Left lung (tissue), 14 donors: ENCODE measurements at regions of chr12 and their contacts with region 1.

Region 1: GRCh38 chr12:121673003-121673511 is 3.6 kb upstream of the MORN3 start:
- DNase-seq: peak in 1 of 4 donors; percentile 37
- ATAC-seq: peak; percentile 18
- H3K4me3 ChIP-seq: peak overlapping the region; percentile 40 to 51
- H3K27ac ChIP-seq: peak overlapping the region in 1 of 2 donors; percentile 64
- H3K4me1 ChIP-seq: peaks cover 7 to 21% of the 10 kb centered on the region in 2 donors
- H3K27me3 ChIP-seq: no peaks in the 10 kb centered on the region
- CTCF ChIP-seq: no peak

Region 2: GRCh38 chr12:121550974-121551634 is 122.0 kb before region 1 on chr12:
- intact Hi-C with region 1: loop called in 1 of 2 experiments (anchors 10 kb)
- DNase-seq: peak in 1 of 4 donors; percentile 25
- ATAC-seq: peak; percentile 79
- H3K4me3 ChIP-seq: no peak overlapping the region
- H3K27ac ChIP-seq: no peak overlapping the region
- H3K4me1 ChIP-seq: peaks cover 0 to 16% of the 10 kb centered on the region in 2 donors
- H3K27me3 ChIP-seq: no peaks in the 10 kb centered on the region
- CTCF ChIP-seq: no peak

Region 3: DNA sequence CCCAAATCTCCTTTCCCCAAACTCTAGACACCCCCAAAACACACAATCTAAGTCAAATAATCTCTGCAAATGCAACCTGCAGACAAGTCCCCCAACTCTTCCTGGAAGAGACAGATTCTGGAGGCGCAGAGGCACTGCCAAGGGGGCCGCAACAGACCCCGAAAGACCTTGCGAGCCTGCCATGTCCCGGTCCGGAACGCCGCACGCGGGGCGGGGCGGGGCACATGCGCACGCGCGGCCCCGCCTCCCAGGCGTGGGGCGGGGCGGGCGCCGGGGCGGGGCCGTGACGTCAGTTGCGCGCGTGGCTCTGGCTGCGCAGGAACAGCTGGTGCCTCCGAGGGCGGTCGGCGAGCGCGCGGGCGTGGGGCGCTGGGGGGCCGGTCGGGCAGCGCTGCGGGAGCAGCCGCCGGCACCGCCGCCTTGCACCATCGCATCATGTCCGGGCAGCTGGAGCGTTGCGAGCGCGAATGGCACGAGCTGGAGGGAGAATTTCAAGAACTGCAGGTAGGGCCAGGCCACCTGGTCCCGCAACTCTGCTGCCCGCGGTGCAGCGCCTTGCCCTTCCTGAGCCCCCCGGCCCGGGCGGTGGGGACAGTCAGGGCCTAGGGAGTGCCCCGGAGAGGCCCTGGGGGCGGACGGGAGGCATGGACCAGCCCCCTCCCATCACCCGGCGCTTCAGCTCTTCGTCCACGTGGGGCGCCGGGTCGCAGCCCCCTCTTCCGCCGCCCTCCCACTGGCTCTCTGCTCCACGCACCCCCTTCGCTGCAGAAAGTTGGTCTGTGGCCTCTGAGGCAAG is 39.6 kb after region 1 on chr12 and contains the start of gene TMEM120B:
- intact Hi-C with region 1: no loop called
- DNase-seq: peak; percentile 86 to 96 (median 86)
- ATAC-seq: peak; percentile 89
- H3K4me3 ChIP-seq: peak within 1 kb of the TSS; percentile 88 to 89
- H3K27ac ChIP-seq: peak within 1 kb of the TSS; percentile 89
- H3K4me1 ChIP-seq: peaks cover 8 to 29% of the 10 kb centered on the region in 2 donors
- H3K27me3 ChIP-seq: no peaks in the 10 kb centered on the region
- CTCF ChIP-seq: no peak
- polyA plus RNA-seq, gene TMEM120B: 8.5 to 14.1 (median 10.4) TPM